Activated CD8-positive, alpha-beta T cell treated with anti-CD3 and anti-CD28 coated beads for 36 hours (primary cell): ENCODE measurements at regions of chr9 and their contacts with region 1.

Region 1: DNA sequence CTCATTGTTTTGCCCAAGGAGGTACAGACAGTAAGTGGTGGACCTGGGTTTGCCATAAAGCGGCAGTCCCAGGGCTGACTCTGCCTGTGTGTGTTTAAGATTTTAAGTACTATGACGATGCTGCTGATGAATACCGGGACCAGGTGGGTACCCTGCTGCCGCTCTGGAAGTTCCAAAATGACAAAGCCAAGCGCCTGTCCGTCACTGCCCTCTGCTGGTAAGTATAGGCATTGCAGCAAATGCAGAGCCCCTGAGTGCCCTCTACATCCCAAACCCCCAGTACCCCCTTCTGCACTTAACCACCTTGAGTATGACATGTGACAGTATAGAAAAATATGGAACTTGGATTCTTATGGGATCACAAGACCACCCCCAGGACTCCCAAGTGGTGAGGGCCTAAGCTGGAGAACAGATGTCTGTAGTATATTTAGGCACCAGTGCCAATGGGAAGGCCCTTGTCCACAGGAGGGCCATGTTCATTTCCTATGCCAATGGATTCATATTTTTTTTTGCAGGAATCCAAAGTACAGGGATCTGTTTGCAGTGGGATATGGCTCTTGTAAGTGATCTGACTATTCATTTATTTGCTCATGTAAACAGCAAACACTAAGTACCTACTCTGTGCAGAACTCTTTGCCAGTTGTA is 22.0 kb downstream of the ENHO start:
- DNase-seq: peak; percentile 84
- ATAC-seq: peak; percentile 95
- H3K4me3 Mint-ChIP-seq: no peak overlapping the region
- H3K27ac Mint-ChIP-seq: no peak overlapping the region
- H3K4me1 Mint-ChIP-seq: peaks cover 3% of the 10 kb centered on the region
- H3K27me3 Mint-ChIP-seq: peaks cover 6% of the 10 kb centered on the region
- CTCF ChIP-seq: peak; percentile 97

Region 2: DNA sequence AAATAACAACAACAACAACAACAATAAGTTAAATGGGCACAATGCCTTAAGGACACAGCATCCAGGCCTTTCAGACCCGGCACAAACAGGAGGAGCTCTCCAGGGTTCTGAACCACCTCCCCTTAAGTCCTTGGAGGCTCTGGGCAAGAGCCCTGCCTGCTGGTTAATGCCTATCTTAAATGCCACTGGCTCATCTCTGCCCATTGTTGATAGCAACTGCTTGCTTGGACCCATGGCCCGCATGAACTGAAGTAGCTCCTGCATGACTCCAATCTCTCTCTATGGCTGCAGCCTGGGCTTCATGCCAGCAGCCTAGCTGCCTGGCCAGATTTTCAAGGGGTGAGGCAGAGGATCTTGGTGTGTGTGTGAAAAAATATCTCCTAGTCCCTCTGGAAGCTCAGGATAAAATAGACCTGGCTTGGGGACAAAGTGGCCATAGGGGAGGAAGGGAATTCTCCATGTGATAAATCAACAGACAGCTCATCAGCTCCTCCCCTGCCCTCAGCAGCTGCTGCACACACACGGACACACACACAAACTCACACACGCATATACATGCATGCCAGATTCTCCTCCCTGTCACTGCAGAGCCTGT is 69.8 kb before region 1 on chr9:
- CTCF ChIA-PET with region 1: interaction called, 74 read pairs
- POLR2A ChIA-PET with region 1: no interaction called
- intact Hi-C with region 1: no loop called
- DNase-seq: peak; percentile 52
- ATAC-seq: no peak
- H3K4me3 Mint-ChIP-seq: no peak overlapping the region
- H3K27ac Mint-ChIP-seq: no peak overlapping the region
- H3K4me1 Mint-ChIP-seq: no peaks in the 10 kb centered on the region
- H3K27me3 Mint-ChIP-seq: no peaks in the 10 kb centered on the region
- CTCF ChIP-seq: no peak

Region 3: DNA sequence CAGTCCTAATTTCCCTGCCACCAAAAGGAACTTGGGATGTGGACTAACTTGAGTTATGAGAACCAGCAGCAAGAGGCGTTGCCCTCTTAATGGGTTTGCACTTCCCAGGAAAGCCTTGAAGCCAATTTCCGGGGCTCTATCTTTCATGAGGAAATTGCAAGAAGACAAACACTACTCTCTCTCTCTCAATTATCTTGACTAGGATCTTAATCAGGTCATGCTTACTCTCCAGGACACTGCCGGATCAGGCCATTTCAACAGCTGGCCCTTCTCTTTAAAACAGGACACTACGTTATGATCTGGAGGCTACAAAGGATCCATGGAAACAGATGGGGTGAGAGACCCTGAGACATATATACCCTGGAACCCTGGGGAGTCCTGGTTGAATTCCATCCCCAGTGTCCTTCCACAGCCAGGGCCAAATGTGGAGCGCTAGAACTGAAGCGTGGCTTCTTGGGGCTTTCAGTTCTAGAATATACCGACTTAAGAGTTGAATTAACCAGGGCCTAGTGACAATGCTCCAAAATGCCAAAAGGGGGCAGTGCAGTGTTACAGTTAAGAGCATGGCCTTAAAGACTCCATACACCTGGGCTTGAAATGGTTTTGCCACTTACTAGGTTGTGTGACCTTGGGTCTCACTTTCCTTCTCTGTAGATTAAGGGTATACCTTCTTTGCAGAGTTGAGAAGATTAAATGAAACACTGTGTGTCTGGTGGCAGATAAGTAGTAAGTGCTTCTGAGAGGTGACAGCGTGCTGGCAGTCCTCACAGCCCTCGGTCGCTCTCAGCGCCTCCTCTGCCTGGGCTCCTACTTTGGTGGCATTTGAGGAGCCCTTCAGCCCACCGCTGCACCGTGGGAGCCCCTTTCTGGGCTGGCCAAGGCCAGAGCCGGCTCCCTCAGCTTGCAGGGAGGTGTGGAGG is 63.5 kb before region 1 on chr9:
- CTCF ChIA-PET with region 1: interaction called, 74 read pairs
- POLR2A ChIA-PET with region 1: no interaction called
- intact Hi-C with region 1: loop called (anchors 1 kb)
- DNase-seq: peak; percentile 81
- ATAC-seq: peak; percentile 99
- H3K4me3 Mint-ChIP-seq: no peak overlapping the region
- H3K27ac Mint-ChIP-seq: no peak overlapping the region
- H3K4me1 Mint-ChIP-seq: peaks cover 7% of the 10 kb centered on the region
- H3K27me3 Mint-ChIP-seq: no peaks in the 10 kb centered on the region
- CTCF ChIP-seq: peak; percentile 82

Region 4: GRCh38 chr9:34446468-34446891 is 54.3 kb before region 1 on chr9:
- CTCF ChIA-PET with region 1: interaction called, 16 read pairs
- POLR2A ChIA-PET with region 1: no interaction called
- intact Hi-C with region 1: no loop called
- DNase-seq: no peak
- ATAC-seq: no peak
- H3K4me3 Mint-ChIP-seq: no peak overlapping the region
- H3K27ac Mint-ChIP-seq: no peak overlapping the region
- H3K4me1 Mint-ChIP-seq: peaks cover 5% of the 10 kb centered on the region
- H3K27me3 Mint-ChIP-seq: no peaks in the 10 kb centered on the region
- CTCF ChIP-seq: no peak

Region 5: DNA sequence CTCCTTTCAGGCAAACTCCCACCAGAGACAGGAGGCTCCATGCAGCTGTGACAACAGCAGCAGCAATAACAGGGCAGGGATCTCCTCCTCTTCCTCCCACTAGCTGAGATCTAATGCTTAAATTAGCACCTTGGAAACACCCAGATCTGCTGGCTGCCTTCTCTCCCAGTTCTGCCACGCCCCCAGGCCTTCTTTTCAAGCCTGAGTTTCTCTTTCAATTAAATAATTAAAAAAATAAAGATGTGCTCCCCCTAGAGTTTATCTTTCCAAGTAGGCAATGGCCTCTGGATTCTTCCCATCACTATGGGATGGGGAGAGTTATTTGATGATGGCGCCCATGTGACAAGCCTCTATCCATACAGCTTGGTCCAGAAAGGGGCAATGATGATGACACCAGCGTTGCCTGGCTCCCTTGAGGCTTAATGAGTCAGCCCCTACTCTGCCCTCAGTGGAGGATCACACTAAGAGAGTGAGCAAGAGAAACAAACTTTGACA is 46.1 kb before region 1 on chr9:
- CTCF ChIA-PET with region 1: interaction called, 18 read pairs
- POLR2A ChIA-PET with region 1: no interaction called
- intact Hi-C with region 1: no loop called
- DNase-seq: peak; percentile 65
- ATAC-seq: peak; percentile 38
- H3K4me3 Mint-ChIP-seq: no peak overlapping the region
- H3K27ac Mint-ChIP-seq: no peak overlapping the region
- H3K4me1 Mint-ChIP-seq: peaks cover 48% of the 10 kb centered on the region
- H3K27me3 Mint-ChIP-seq: peaks cover 2% of the 10 kb centered on the region
- CTCF ChIP-seq: no peak